ENCODE measurements at regions of chr11 and their contacts with region 1.

Region 1: DNA sequence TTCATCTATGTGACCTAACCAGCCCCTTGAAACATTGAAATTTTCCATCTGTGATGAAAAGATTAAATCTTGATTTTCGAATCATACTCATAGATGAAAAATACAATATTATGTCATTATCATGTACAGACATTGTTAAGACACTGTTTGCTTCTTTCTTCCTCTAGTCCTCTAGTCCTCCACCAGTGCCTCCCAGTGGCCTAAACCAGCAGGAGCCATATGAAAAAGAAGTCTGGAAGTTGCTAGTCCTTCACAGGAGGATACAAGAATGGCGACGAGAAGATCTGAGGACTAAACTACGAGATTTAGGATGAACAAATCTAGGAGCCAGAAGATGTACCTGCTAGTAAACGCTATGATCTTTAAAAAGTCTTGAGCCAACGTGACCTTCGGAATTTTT is 134.1 kb downstream of the SLC17A6 start:
- DNase-seq: peak; percentile 26
- H3K4me3 ChIP-seq: no peak overlapping the region
- H3K27ac ChIP-seq: no peak overlapping the region
- H3K4me1 ChIP-seq: peaks cover 6% of the 10 kb centered on the region
- H3K27me3 ChIP-seq: no peaks in the 10 kb centered on the region
- CTCF ChIP-seq: peak; percentile 46 to 52

Region 2: DNA sequence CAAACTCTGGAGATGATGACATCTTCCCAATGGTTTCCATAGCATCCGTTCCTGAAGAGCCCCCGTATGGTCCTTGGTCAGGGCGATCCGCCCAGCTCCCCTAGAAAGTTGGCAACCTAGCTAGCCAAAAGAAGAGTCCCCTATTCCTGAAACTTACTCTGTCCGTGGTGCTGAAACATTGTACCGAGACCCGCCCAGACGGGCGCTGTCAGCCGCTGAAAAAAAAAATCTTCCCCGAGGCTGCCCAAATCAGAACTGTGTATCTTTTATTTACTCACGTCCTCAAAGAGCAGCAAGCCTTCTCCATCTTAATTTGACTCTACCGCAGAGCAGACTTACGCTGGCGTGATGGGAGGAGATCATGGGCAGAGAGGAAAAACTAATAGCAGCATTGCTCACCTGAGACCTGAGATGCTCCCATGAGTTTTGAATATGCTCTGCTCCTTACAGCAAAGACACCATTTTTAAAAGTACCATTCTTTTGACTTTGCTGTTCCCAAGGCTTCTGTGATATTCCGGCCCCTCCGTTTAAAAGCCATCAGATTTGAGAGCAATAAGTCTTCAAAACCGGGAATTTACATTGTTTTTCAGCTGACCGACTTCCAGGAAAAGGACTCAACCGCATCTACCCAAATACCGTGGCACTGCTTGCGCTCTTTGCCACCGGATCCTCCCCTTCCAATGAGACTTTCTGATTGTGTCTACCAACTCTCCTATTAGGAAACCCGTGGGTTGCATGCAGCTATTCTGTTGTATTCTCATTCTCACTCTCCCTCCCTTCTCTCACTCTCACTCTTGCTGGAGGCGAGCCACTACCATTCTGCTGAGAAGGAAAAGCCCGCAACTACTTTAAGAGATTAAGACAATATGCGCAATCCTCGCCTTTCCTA is 134.5 kb before region 1 on chr11 and contains the start of gene SLC17A6:
- CTCF ChIA-PET with region 1: no interaction called
- dilution Hi-C with region 1: no loop called
- in situ Hi-C with region 1: no loop called
- intact Hi-C with region 1: loop called (anchors 1 kb)
- DNase-seq: peak; percentile 31
- H3K4me3 ChIP-seq: no peak within 1 kb of the TSS
- H3K27ac ChIP-seq: no peak within 1 kb of the TSS
- H3K4me1 ChIP-seq: no peaks in the 10 kb centered on the region
- H3K27me3 ChIP-seq: peaks cover 35% of the 10 kb centered on the region
- CTCF ChIP-seq: no peak
- total RNA-seq, gene SLC17A6: not detected

Region 3: GRCh38 chr11:22426915-22427314 is 45.4 kb before region 1 on chr11:
- CTCF ChIA-PET with region 1: no interaction called
- dilution Hi-C with region 1: no loop called
- in situ Hi-C with region 1: no loop called
- intact Hi-C with region 1: loop called (anchors 1 kb)
- DNase-seq: no peak
- H3K4me3 ChIP-seq: no peak overlapping the region
- H3K27ac ChIP-seq: no peak overlapping the region
- H3K4me1 ChIP-seq: no peaks in the 10 kb centered on the region
- H3K27me3 ChIP-seq: no peaks in the 10 kb centered on the region
- CTCF ChIP-seq: peak in 1 of 2 donors; percentile 49

Region 4: GRCh38 chr11:22554221-22554620 is 81.9 kb after region 1 on chr11:
- CTCF ChIA-PET with region 1: no interaction called
- dilution Hi-C with region 1: no loop called
- in situ Hi-C with region 1: no loop called
- intact Hi-C with region 1: no loop called
- DNase-seq: no peak
- H3K4me3 ChIP-seq: no peak overlapping the region
- H3K27ac ChIP-seq: no peak overlapping the region
- H3K4me1 ChIP-seq: no peaks in the 10 kb centered on the region
- H3K27me3 ChIP-seq: no peaks in the 10 kb centered on the region
- CTCF ChIP-seq: no peak

Region 5: GRCh38 chr11:22581354-22582150 is 109.2 kb after region 1 on chr11:
- CTCF ChIA-PET with region 1: no interaction called
- dilution Hi-C with region 1: no loop called
- in situ Hi-C with region 1: no loop called
- intact Hi-C with region 1: no loop called
- DNase-seq: no peak
- H3K4me3 ChIP-seq: no peak overlapping the region
- H3K27ac ChIP-seq: no peak overlapping the region
- H3K4me1 ChIP-seq: no peaks in the 10 kb centered on the region
- H3K27me3 ChIP-seq: peaks cover 2% of the 10 kb centered on the region
- CTCF ChIP-seq: no peak

Measured in mammary epithelial cell (primary cell).